ENCODE measurements at regions of chr2 and their contacts with region 1.

Region 1: DNA sequence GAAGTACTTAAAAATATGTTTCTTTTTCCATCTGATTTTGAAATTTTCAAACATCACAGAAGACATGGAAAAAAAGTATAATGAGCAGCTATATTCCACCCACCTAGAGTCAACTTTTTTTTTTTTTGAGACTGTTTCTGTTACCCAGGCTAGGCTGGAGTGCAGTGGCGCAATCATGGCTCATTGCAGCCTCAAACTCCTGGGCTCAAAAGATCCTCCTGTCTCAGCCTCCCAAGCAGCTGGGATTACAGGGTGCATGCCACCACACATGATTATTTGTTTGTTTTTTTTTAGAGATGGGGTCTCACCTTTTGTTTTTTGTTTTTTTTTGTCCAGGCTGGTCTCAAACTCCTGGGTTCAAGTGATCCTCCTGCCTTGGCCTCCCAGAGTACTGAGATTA is 26.6 kb upstream of the UGGT1 start:
- DNase-seq: no peak
- ATAC-seq: no peak
- H3K4me3 Mint-ChIP-seq: no peak overlapping the region
- H3K27ac Mint-ChIP-seq: no peak overlapping the region
- H3K4me1 Mint-ChIP-seq: no peaks in the 10 kb centered on the region
- H3K27me3 Mint-ChIP-seq: no peaks in the 10 kb centered on the region

Region 2: GRCh38 chr2:128232965-128233789 is 168.8 kb after region 1 on chr2:
- CTCF ChIA-PET with region 1: interaction called, 11 read pairs
- POLR2A ChIA-PET with region 1: no interaction called
- DNase-seq: peak; percentile 90
- ATAC-seq: peak; percentile 98
- H3K4me3 Mint-ChIP-seq: peak overlapping the region; percentile 74
- H3K27ac Mint-ChIP-seq: no peak overlapping the region
- H3K4me1 Mint-ChIP-seq: no peaks in the 10 kb centered on the region
- H3K27me3 Mint-ChIP-seq: peaks cover 6% of the 10 kb centered on the region

Region 3: GRCh38 chr2:128520791-128521190 is 456.4 kb after region 1 on chr2:
- CTCF ChIA-PET with region 1: no interaction called
- POLR2A ChIA-PET with region 1: no interaction called
- DNase-seq: peak; percentile 32
- ATAC-seq: peak; percentile 33
- H3K4me3 Mint-ChIP-seq: no peak overlapping the region
- H3K27ac Mint-ChIP-seq: no peak overlapping the region
- H3K4me1 Mint-ChIP-seq: peaks cover 5% of the 10 kb centered on the region
- H3K27me3 Mint-ChIP-seq: peaks cover 2% of the 10 kb centered on the region